Psoas muscle (tissue), 8 donors: ENCODE measurements at regions of chr16 and their contacts with region 1.

Region 1: DNA sequence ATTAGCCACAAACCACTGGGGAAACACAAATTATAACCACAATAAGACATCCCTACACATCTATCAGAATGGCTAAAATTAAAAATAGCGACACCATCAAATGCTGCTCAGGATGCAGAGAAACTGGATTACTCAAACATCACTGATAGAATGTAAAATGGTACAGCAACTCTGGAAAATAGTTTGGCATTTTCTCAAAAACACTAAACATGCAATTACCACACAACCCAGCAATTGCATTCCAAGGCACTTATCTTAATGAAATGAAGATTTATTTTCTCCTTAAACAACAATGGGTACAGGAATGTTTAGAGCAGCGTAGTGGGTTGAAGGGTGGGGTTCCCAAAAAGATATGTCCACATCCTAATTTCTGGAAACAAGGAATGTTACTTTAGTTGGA is 308.9 kb upstream of the PMFBP1 start:
- DNase-seq: no peak
- ATAC-seq: no peak
- H3K4me3 ChIP-seq: no peak overlapping the region
- H3K27ac ChIP-seq: no peak overlapping the region
- H3K4me1 ChIP-seq: no peaks in the 10 kb centered on the region
- H3K27me3 ChIP-seq: no peaks in the 10 kb centered on the region
- CTCF ChIP-seq: no peak

Region 2: DNA sequence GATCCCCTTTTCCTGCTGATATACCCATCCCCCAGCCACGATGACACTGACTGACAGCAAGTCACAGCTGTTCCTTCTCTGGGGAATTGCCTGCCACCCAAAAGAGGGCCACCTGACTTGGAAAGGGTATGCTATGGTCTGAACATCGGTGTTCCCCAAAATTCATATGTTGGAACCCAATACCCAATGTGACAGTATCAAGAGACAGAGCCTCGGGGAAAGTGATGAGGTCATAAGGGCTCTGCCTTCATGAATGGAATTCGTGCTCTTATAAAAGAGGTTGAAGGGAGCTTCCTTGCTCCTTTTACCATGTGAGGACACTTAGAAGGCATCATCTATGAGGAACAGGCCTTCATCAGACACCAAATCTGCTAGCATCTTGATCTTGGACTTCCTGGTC is 862.5 kb before region 1 on chr16:
- intact Hi-C with region 1: loop called in 1 of 2 experiments (anchors 5 kb)
- DNase-seq: no peak
- ATAC-seq: no peak
- H3K4me3 ChIP-seq: no peak overlapping the region
- H3K27ac ChIP-seq: no peak overlapping the region
- H3K4me1 ChIP-seq: no peaks in the 10 kb centered on the region
- H3K27me3 ChIP-seq: peaks cover 0 to 21% (median 0%) of the 10 kb centered on the region in 3 donors
- CTCF ChIP-seq: no peak

Region 3: DNA sequence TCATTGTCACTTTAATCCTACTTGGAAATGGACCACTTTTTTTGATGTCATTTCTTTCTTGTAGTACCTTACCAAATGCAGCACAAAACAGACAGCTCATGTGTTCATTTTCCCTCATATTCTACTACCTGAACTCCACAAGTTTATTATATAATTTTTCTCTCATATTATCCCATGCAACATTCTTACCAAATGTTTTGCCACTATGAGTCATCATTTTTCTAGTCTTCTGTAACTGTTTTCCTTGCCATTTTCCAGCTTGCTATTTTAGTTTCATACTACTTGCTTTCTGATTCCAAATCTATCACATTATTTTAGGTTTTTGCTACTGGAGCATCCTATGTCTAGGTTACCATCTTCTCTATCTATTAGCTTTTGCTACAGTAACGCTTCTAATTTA is 234.4 kb after region 1 on chr16:
- intact Hi-C with region 1: no loop called
- DNase-seq: no peak
- ATAC-seq: no peak
- H3K4me3 ChIP-seq: no peak overlapping the region
- H3K27ac ChIP-seq: no peak overlapping the region
- H3K4me1 ChIP-seq: no peaks in the 10 kb centered on the region
- H3K27me3 ChIP-seq: no peaks in the 10 kb centered on the region
- CTCF ChIP-seq: no peak